ENCODE measurements at regions of chr1 and their contacts with region 1.

Region 1: GRCh38 chr1:203038891-203039608 is 12.8 kb downstream of the PPFIA4 start:
- DNase-seq: peak in 1 of 2 experiments; percentile 86
- H3K4me3 ChIP-seq: no peak overlapping the region
- H3K27ac ChIP-seq: no peak overlapping the region
- H3K4me1 ChIP-seq: peaks cover 2 to 15% (median 5%) of the 10 kb centered on the region in 4 experiments
- H3K27me3 ChIP-seq: no peaks in the 10 kb centered on the region
- CTCF ChIP-seq: peak; percentile 87 to 97 (median 88)
- EP300 ChIP-seq: no peak
- POLR2A ChIP-seq: no peak
- RAD21 ChIP-seq: peak; percentile 88 to 94

Region 2: GRCh38 chr1:203084588-203085502 is 45.8 kb after region 1 on chr1:
- CTCF ChIA-PET with region 1: interaction called, 139 read pairs
- POLR2A ChIA-PET with region 1: interaction called, 3 read pairs
- DNase-seq: peak; percentile 47 to 92
- H3K4me3 ChIP-seq: no peak overlapping the region
- H3K27ac ChIP-seq: no peak overlapping the region
- H3K4me1 ChIP-seq: peaks cover 9 to 14% (median 11%) of the 10 kb centered on the region in 4 experiments
- H3K27me3 ChIP-seq: 0 out of 7 replicates have a peak, but pooled peaks cover 0 to 2% (median 0%) of the 10 kb centered on the region in 4 experiments
- CTCF ChIP-seq: peak; percentile 90 to 96 (median 96)
- EP300 ChIP-seq: no peak
- POLR2A ChIP-seq: no peak
- RAD21 ChIP-seq: peak; percentile 68 to 77

Region 3: GRCh38 chr1:203101915-203102634 is 63.0 kb after region 1 on chr1:
- CTCF ChIA-PET with region 1: interaction called, 1,071 read pairs
- POLR2A ChIA-PET with region 1: no interaction called
- DNase-seq: no peak
- H3K4me3 ChIP-seq: no peak overlapping the region
- H3K27ac ChIP-seq: no peak overlapping the region
- H3K4me1 ChIP-seq: no peaks in the 10 kb centered on the region
- H3K27me3 ChIP-seq: peaks cover 0 to 4% (median 0%) of the 10 kb centered on the region in 4 experiments; a peak in 1 of 7 replicates
- CTCF ChIP-seq: no peak
- EP300 ChIP-seq: no peak
- POLR2A ChIP-seq: no peak
- RAD21 ChIP-seq: no peak

Region 4: DNA sequence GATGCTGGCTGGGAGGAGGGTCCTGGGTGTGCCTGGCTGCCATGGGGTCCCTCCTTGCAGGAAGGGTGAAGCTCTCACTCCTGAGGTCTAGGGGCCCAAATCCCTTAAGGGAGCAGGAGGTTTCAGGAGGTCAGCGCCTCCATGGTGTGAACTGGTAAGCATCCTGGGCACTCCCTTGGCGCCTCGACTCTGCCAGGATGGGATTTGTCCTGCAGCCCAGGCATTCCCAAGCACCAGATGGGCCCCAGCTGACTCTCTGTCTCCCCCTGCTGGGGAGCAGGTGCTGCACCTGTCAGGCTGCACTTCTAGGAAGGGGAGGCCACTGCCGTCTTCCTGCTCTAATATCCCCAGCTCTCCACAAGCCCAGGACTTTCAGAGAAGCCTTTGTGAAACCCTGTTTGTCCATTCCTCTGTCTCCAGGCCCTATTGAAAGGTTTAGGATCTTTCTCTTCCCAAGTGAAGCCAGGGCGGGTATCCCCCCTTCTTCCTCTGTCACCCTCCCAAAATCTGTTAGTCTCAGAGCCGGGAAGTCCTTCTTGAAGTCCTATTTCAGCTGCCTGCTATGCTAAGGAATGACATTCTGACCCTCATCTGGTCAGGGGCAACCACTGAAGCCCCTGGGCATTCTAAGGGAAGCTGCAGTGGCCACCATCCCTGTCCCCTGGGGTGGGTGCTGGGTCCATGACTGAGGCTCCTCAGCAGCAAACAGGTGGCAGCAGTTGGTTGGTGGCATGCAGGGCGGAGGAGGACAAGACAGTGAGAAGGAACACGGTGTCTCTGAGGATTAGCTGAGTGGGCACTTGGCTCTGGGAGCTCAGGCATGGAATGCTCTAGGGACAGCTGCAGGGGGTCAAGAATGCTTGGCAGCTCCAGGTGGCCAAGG is 133.3 kb after region 1 on chr1:
- CTCF ChIA-PET with region 1: interaction called, 106 read pairs
- POLR2A ChIA-PET with region 1: interaction called, 6 read pairs
- DNase-seq: peak; percentile 68 to 92
- H3K4me3 ChIP-seq: no peak overlapping the region
- H3K27ac ChIP-seq: no peak overlapping the region
- H3K4me1 ChIP-seq: peaks cover 0 to 7% (median under 1%) of the 10 kb centered on the region in 4 experiments; a peak in 3 of 7 replicates
- H3K27me3 ChIP-seq: no peaks in the 10 kb centered on the region
- CTCF ChIP-seq: peak; percentile 97 to 99 (median 97)
- EP300 ChIP-seq: no peak
- POLR2A ChIP-seq: no peak
- RAD21 ChIP-seq: peak; percentile 82 to 90

Region 5: DNA sequence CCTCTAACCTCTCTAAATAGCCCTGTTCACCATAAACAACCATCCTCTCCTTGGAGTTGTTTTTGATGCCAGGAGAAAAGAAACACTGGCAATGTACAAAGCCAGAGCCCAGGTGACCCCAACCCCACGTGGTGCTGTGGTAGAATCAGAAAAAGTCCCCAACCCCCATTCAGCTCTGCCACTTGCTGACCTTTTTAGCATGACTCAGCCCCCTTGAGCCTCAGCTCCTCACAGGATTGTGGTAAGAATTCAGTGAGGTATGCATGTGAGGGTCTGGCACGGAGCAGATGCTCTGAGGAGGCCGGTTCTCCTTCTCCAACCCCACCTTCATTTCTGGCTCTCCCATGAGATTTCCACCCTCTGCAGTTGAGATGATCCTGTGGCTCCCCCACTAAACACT is 158.6 kb after region 1 on chr1:
- CTCF ChIA-PET with region 1: interaction called, 20 read pairs
- POLR2A ChIA-PET with region 1: no interaction called
- DNase-seq: no peak
- H3K4me3 ChIP-seq: no peak overlapping the region
- H3K27ac ChIP-seq: no peak overlapping the region
- H3K4me1 ChIP-seq: peaks cover 0 to 3% (median 0%) of the 10 kb centered on the region in 4 experiments; a peak in 1 of 7 replicates
- H3K27me3 ChIP-seq: no peaks in the 10 kb centered on the region; a peak in 1 of 7 replicates
- CTCF ChIP-seq: no peak
- EP300 ChIP-seq: no peak
- POLR2A ChIP-seq: no peak
- RAD21 ChIP-seq: no peak

Region 6: GRCh38 chr1:203229471-203230135 is 190.6 kb after region 1 on chr1 and contains the start of gene CHIT1:
- CTCF ChIA-PET with region 1: interaction called, 46 read pairs
- POLR2A ChIA-PET with region 1: no interaction called
- DNase-seq: no peak
- H3K4me3 ChIP-seq: no peak within 1 kb of the TSS
- H3K27ac ChIP-seq: no peak within 1 kb of the TSS
- H3K4me1 ChIP-seq: no peaks in the 10 kb centered on the region
- H3K27me3 ChIP-seq: no peaks in the 10 kb centered on the region
- CTCF ChIP-seq: no peak
- EP300 ChIP-seq: no peak
- POLR2A ChIP-seq: no peak
- RAD21 ChIP-seq: no peak
- total RNA-seq, gene CHIT1: not detected in 2 replicates

Region 7: GRCh38 chr1:203663294-203663693 is 624.2 kb after region 1 on chr1:
- CTCF ChIA-PET with region 1: no interaction called
- POLR2A ChIA-PET with region 1: no interaction called
- DNase-seq: no peak
- H3K4me3 ChIP-seq: no peak overlapping the region
- H3K27ac ChIP-seq: no peak overlapping the region
- H3K4me1 ChIP-seq: peaks cover 0 to 2% (median under 1%) of the 10 kb centered on the region in 4 experiments; a peak in 1 of 7 replicates
- H3K27me3 ChIP-seq: no peaks in the 10 kb centered on the region
- CTCF ChIP-seq: no peak
- EP300 ChIP-seq: no peak
- POLR2A ChIP-seq: no peak
- RAD21 ChIP-seq: no peak

Measured in H1 (cell line).